Activated CD4-positive, alpha-beta memory T cell treated with anti-CD3 and anti-CD28 coated beads, Interleukin-2, amount 10 ng/mL, durations not matched to agents 7 days and 5 days (primary cell): ENCODE measurements at regions of chr19 and their contacts with region 1.

Region 1: GRCh38 chr19:3108775-3109174 is 14.6 kb downstream of the GNA11 start:
- DNase-seq: peak; percentile 76
- H3K4me3 Mint-ChIP-seq: no peak overlapping the region
- H3K27ac Mint-ChIP-seq: no peak overlapping the region
- H3K4me1 Mint-ChIP-seq: peaks cover 8% of the 10 kb centered on the region
- H3K27me3 Mint-ChIP-seq: peaks cover 3% of the 10 kb centered on the region

Region 2: DNA sequence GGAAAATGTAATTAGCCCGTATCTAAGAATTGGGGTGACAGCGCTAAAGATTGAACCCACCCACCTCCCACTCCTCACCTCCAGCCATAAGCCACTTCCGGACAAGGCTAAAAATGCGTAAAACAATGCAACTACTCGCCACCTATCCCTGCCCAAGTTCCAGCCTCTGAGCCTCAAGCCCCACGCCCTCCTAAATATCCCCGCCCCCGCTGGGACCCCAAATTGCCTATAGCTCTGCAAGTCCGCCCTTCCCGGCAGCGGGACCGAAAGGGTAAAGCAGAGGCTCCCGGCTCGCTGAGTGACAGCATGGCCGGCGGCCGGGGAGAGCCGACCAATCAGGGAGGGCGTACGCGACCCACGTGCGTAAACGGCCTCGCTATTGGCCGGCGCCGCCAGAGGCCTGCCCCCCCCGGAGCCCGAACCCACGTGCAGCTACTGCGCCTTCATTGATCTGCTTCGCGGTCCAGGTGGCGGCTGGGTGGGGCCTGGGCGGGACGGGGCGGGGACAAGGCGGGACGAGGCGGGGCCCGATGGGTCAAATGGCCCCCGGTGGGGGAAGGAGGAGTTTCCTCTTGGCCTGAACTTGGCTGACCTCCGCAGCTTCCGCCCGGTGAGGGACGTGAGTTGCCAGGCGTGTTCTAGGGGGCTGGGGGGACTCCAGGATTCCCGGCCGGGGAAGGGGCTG is 131.6 kb before region 1 on chr19 and contains the start of gene TLE6:
- CTCF ChIA-PET with region 1: interaction called, 19 read pairs
- POLR2A ChIA-PET with region 1: no interaction called
- DNase-seq: peak; percentile 96
- H3K4me3 Mint-ChIP-seq: peak within 1 kb of the TSS; percentile 90
- H3K27ac Mint-ChIP-seq: peak within 1 kb of the TSS; percentile 74
- H3K4me1 Mint-ChIP-seq: peaks cover 21% of the 10 kb centered on the region
- H3K27me3 Mint-ChIP-seq: peaks cover 9% of the 10 kb centered on the region
- total RNA-seq, gene TLE6: 1.1 to 2.0 TPM

Region 3: DNA sequence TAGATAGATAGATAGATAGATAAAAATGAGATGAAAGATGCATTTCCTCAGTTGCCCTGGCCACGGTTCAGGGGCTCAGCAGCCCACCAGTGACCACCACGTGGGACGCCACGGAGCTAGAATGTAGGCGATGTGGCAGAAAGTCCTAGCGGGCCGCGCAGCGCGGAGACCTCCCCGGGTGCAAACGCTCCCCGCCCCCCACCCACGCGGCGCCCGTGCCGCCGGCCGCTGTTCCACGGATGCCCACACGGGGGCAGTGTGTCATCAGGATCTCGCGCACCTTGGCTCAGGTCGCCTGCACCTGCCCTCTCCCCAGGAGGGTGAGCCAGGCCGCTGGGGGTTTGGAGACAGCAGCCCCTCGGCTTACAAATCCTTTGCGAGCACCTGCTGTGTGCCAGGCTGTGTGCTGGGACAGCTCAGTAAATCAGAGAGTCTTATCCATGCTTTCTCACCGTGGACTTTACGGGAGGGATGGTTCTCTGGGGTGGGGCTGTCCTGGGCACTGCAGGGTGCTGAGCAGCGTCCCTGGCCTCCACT is 32.8 kb before region 1 on chr19:
- CTCF ChIA-PET with region 1: interaction called, 31 read pairs
- POLR2A ChIA-PET with region 1: interaction called, 3 read pairs
- DNase-seq: peak; percentile 75
- H3K4me3 Mint-ChIP-seq: no peak overlapping the region
- H3K27ac Mint-ChIP-seq: no peak overlapping the region
- H3K4me1 Mint-ChIP-seq: peaks cover 3% of the 10 kb centered on the region
- H3K27me3 Mint-ChIP-seq: no peaks in the 10 kb centered on the region

Region 4: DNA sequence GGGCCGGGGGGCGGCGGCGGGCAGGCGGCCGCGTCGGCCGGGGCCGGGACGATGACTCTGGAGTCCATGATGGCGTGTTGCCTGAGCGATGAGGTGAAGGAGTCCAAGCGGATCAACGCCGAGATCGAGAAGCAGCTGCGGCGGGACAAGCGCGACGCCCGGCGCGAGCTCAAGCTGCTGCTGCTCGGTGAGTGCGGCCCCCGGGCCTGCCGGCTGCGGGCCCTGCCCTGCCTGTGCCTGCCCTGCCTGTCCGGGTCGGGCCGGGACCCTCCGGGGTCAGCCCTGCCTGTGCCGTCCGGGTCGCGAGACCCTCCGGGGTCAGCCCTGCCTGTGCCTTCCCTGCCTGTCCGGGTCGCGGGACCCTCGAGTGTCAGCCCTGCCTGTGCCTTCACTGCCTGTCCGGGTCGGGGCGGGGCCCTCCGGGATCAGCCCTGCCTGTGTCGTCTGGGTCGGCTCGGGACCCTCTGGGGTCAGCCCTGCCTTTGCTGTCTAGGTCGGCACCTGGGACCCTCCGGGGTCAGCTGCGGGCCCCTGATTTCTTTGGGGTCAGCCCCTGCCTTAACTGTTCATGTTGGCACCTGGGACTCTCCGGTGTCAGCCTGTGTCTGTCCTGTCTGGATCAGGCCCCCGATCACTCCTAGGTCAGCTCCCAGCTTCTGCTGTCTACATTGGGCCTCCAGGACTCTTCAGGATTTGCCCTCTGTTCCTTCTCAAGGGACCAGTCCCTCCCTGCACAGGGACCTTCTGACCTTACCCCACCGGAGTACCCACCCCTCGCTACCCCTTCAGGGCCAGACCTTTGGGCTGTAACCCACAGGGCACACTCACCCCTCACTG is 14.0 kb before region 1 on chr19:
- CTCF ChIA-PET with region 1: interaction called, 14 read pairs
- POLR2A ChIA-PET with region 1: no interaction called
- DNase-seq: peak; percentile 33
- H3K4me3 Mint-ChIP-seq: peak overlapping the region; percentile 21
- H3K27ac Mint-ChIP-seq: no peak overlapping the region
- H3K4me1 Mint-ChIP-seq: peaks cover 24% of the 10 kb centered on the region
- H3K27me3 Mint-ChIP-seq: peaks cover 43% of the 10 kb centered on the region

Region 5: GRCh38 chr19:3163230-3163886 is 54.6 kb after region 1 on chr19:
- CTCF ChIA-PET with region 1: interaction called, 23 read pairs
- POLR2A ChIA-PET with region 1: no interaction called
- DNase-seq: peak; percentile 76
- H3K4me3 Mint-ChIP-seq: no peak overlapping the region
- H3K27ac Mint-ChIP-seq: peak overlapping the region; percentile 73
- H3K4me1 Mint-ChIP-seq: peaks cover 61% of the 10 kb centered on the region
- H3K27me3 Mint-ChIP-seq: no peaks in the 10 kb centered on the region